Activated T-helper 1 cell treated with anti-CD3 and anti-CD28 coated beads, Interleukin-12 subunit alpha, Interleukin-12 subunit beta, Interleukin-2, Interleukin-4 antibody, amounts not matched to agents 30 ng/mL and 10 ng/mL and 1 ng/mL, durations not matched to agents 14 hours and 24 hours and 36 hours (primary cell): ENCODE measurements at regions of chr6 and their contacts with region 1.

Region 1: DNA sequence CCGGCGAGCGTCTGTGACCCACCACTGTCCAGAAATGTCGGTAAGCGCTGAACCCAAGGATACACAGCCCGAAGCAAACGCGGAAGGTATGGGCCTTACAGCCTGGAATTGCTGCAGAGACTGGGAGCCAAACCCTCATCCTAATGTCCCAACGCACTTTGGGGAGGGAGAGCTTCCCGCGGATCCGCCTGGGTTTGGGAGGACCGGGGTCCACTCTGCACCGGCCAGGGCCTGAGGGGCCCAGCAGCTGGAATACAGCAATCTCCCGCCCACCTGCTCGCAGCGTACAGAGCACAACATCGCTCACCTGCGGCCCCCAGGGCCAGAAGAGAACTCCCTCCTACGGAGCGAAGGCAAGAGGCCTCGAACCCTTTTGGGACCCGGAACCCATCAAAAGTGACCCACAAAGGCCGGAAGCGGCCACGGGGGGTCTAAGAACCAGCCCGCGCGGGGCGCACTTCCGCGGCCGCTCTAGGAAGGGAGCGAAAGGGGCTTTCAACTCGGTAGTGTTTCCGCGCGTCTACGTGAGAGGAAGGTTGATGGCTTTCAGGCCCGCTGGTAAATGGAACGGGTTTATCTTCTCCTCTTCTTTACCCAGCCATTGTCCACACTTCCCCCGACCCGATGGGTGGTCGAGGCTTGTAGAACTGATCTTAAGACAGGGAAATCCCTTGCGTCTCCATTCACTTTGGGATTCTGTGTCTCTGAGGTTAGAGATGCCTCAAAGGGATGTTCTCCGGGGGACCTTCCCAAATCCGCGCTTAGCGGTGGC is at the start of gene ZSCAN12:
- DNase-seq: peak; percentile 76
- H3K4me3 Mint-ChIP-seq: peak within 1 kb of the TSS; percentile 90
- H3K27ac Mint-ChIP-seq: peak within 1 kb of the TSS; percentile 84
- H3K4me1 Mint-ChIP-seq: peaks cover 48% of the 10 kb centered on the region
- H3K27me3 Mint-ChIP-seq: peaks cover 15% of the 10 kb centered on the region
- total RNA-seq, gene ZSCAN12: 5.6 and 5.7 TPM in 2 replicates

Region 2: GRCh38 chr6:28053584-28053983 is 346.0 kb before region 1 on chr6:
- intact Hi-C with region 1: no loop called
- DNase-seq: no peak
- H3K4me3 Mint-ChIP-seq: no peak overlapping the region
- H3K27ac Mint-ChIP-seq: no peak overlapping the region
- H3K4me1 Mint-ChIP-seq: no peaks in the 10 kb centered on the region
- H3K27me3 Mint-ChIP-seq: peaks cover 13% of the 10 kb centered on the region

Region 3: DNA sequence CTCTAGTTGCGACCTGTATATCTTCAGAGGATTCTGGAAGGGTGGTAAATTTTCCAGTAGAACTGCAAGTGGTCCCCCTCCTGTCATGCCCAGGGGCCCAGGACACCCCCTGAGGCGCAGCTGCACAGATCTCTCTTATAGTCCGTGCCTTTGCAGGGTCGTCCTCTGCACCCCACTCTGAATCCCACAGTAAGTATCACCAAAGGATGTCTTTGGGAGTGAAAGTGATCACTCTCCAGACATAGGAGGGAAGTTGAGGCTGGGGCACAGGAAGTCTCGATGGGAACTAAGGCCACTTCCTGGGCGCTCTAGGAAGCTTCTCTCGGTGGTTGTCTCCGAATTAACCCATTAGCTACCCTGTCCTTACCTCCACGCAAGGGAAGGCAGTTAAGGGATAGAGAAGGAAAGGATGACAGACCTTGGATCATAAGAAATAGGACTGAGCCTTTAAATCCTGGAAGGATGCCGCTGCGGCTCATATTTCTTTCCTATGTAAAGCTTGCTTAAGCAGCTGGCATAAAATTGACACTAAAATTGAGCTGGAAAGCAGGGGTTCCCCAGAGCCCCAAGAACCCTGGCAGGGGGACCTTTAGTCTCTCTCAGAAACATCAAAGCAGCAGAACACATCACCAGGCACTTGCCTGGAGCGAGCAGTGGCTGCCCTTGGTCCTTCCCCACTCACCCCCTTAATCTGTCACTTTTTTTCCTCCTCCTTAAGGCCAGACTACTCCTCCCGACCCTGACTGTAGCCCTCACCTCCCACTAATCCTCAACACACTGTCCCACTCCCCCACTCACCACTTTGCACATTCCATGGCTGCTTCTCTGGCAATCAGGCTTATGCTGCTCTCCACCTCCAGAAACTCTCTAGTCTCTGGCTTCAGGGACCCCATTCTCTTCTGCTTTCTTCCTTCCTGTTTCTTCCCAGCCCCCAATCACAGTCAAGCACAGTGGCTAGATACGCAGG is 147.2 kb before region 1 on chr6 and contains the start of gene ZKSCAN4:
- intact Hi-C with region 1: loop called (anchors 1 kb)
- DNase-seq: peak; percentile 72
- H3K4me3 Mint-ChIP-seq: peak within 1 kb of the TSS; percentile 99
- H3K27ac Mint-ChIP-seq: peak within 1 kb of the TSS; percentile 89
- H3K4me1 Mint-ChIP-seq: peaks cover 26% of the 10 kb centered on the region
- H3K27me3 Mint-ChIP-seq: peaks cover 3% of the 10 kb centered on the region
- total RNA-seq, gene ZKSCAN4: 4.8 and 6.0 TPM in 2 replicates

Region 4: GRCh38 chr6:28349892-28350737 is 49.4 kb before region 1 on chr6 and contains the start of gene ZKSCAN3:
- intact Hi-C with region 1: loop called (anchors 1 kb)
- DNase-seq: peak; percentile 84
- H3K4me3 Mint-ChIP-seq: peak within 1 kb of the TSS; percentile 98
- H3K27ac Mint-ChIP-seq: peak within 1 kb of the TSS; percentile 91
- H3K4me1 Mint-ChIP-seq: peaks cover 28% of the 10 kb centered on the region
- H3K27me3 Mint-ChIP-seq: peaks cover 16% of the 10 kb centered on the region
- total RNA-seq, gene ZKSCAN3: 2.9 and 3.3 TPM in 2 replicates

Region 5: GRCh38 chr6:28474441-28475219 is 75.1 kb after region 1 on chr6:
- intact Hi-C with region 1: loop called (anchors 5 kb)
- DNase-seq: no peak
- H3K4me3 Mint-ChIP-seq: peak overlapping the region; percentile 75
- H3K27ac Mint-ChIP-seq: no peak overlapping the region
- H3K4me1 Mint-ChIP-seq: peaks cover 11% of the 10 kb centered on the region
- H3K27me3 Mint-ChIP-seq: peaks cover 62% of the 10 kb centered on the region

Region 6: DNA sequence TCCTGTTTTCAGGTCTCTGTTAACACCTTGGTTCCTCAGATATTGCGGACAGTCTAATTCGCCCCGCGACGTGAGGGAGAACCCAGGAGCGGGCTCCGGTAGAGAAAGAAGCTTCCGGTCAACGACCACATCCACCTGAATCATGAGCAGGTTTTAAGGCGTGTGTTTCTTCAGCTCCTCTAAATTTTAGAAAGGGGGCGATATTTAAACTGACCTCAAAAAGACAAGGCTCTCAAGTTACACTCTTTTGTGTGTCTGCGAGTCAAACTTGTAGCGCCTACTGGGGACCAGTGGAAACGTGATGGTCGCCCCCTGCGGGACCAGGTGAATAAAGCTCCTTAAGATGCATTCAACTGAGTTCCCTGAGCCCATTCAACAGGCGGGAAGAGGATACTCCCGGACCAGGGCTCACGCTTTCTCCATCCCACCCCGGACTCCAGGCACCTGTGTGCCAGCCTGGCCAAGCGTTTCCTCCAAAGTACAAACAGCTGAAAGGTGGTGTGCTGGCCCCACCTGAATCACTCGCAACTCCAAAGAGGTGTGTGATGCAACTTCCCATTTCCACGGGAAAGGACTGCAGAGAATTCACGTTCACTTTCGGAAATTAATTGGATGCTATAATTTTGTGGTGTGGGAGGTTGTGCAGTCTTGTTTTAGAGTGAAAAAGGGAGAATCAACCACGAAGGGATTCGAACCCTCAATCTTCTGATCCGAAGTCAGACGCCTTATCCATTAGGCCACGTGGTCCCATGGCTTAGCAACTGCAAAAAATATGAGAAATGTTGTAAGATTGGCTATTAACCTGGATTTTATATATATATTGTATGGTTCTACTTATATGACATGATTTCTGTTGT is 143.1 kb after region 1 on chr6:
- intact Hi-C with region 1: loop called (anchors 1 kb)
- DNase-seq: peak; percentile 18
- H3K4me3 Mint-ChIP-seq: peak overlapping the region; percentile 77
- H3K27ac Mint-ChIP-seq: peak overlapping the region; percentile 44
- H3K4me1 Mint-ChIP-seq: peaks cover 28% of the 10 kb centered on the region
- H3K27me3 Mint-ChIP-seq: peaks cover 44% of the 10 kb centered on the region